ENCODE measurements at regions of chr1 and their contacts with region 1.

Region 1: DNA sequence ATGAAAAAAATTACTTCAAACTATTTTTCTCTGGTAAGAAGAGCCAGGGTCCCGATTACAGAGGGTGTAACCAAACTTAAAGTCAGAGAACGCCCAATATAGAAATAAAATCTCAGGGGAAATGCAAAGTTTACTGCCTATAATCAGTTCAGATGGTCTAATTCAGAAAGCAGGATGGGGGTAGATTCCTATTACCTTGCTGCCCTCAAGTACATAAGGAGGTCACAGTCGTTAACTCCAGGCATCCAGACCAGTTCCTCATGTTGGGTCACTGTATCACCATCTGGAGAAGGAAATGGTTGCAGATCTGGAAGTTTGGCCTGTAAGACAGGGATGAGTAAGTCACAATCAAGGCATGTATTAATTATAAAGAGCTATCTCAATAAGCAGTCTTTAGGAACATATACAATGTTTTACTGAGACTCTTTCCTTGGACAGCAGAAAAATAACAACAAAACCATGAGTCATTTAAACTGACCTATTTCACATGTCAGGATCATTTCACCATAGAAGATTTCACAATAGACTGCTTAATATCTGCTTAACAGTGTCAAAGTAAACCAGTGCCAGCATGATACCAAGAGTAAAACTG is 179.4 kb downstream of the SLC45A1 start:
- DNase-seq: no peak
- ATAC-seq: no peak
- H3K4me3 ChIP-seq: no peak overlapping the region
- H3K4me3 Mint-ChIP-seq: no peak overlapping the region
- H3K27ac ChIP-seq: peak overlapping the region; percentile 84
- H3K27ac Mint-ChIP-seq: peak overlapping the region; percentile 90 to 91
- H3K4me1 ChIP-seq: peaks cover 12% of the 10 kb centered on the region
- H3K4me1 Mint-ChIP-seq: peaks cover 20 to 22% of the 10 kb centered on the region in 2 donors
- H3K27me3 ChIP-seq: no peaks in the 10 kb centered on the region
- H3K27me3 Mint-ChIP-seq: no peaks in the 10 kb centered on the region
- CTCF ChIP-seq: no peak

Region 2: GRCh38 chr1:8396786-8397406 is 100.4 kb before region 1 on chr1:
- intact Hi-C with region 1: loop called (anchors 10 kb)
- DNase-seq: peak in 1 of 2 donors; percentile 49
- ATAC-seq: peak; percentile 82 to 88 (median 83)
- H3K4me3 ChIP-seq: no peak overlapping the region
- H3K4me3 Mint-ChIP-seq: peak overlapping the region; percentile 68
- H3K27ac ChIP-seq: no peak overlapping the region
- H3K27ac Mint-ChIP-seq: peak overlapping the region; percentile 22 to 67
- H3K4me1 ChIP-seq: peaks cover 28% of the 10 kb centered on the region
- H3K4me1 Mint-ChIP-seq: peaks cover 46 to 50% of the 10 kb centered on the region in 2 donors
- H3K27me3 ChIP-seq: no peaks in the 10 kb centered on the region
- H3K27me3 Mint-ChIP-seq: no peaks in the 10 kb centered on the region
- CTCF ChIP-seq: no peak

Region 3: DNA sequence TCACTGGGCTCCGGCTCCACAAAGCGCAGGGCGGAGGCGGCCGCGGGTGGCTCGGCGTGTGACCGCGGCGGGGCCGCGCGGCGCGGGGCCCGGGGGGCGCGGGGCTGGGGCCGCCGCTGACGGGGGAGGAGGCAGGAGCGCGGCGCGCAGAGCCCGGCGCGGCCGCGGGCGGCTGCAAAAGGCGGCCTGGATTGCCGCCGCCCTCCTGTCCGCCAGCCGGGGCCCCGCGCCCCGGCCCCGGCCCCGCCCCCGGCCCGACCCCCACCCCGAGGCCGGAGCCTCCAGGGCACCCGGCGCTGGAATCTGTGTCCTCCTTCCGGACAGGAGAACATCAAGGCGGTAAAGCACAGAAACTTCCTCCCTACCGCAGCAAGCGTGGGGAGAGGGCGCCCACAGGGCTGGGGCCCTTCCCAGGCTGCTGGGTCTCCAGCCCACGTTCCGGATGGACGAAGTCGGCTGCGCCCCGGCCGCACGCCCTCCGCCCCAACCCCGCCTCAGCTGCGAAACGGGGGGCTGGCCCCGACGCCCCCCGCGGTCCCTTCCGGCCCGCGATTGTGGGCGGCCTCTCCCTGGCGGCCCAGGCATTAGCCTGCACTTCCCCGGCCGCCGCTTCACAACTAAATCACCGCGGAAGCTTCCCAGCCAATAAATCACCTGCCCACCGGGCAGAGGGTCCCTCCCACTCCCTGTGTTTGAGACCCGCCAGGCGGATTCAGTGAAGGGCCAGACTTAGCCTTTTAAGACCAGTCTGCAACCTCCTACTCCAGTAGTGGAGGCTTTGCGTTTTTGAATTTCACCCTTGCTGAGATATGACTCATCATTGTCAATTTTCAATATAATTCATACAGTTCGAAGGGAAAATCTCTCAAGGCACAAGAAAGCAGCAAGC is 73.4 kb before region 1 on chr1:
- intact Hi-C with region 1: loop called (anchors 1 kb)
- DNase-seq: peak; percentile 47 to 67
- ATAC-seq: peak; percentile 48 to 60 (median 57)
- H3K4me3 ChIP-seq: peak overlapping the region; percentile 70
- H3K4me3 Mint-ChIP-seq: peak overlapping the region; percentile 96
- H3K27ac ChIP-seq: peak overlapping the region; percentile 65
- H3K27ac Mint-ChIP-seq: peak overlapping the region; percentile 80 to 91
- H3K4me1 ChIP-seq: peaks cover 49% of the 10 kb centered on the region
- H3K4me1 Mint-ChIP-seq: peaks cover 39 to 54% of the 10 kb centered on the region in 2 donors
- H3K27me3 ChIP-seq: no peaks in the 10 kb centered on the region
- H3K27me3 Mint-ChIP-seq: peaks cover 8 to 12% of the 10 kb centered on the region in 2 donors
- CTCF ChIP-seq: no peak

Region 4: GRCh38 chr1:8477166-8477982 is 19.9 kb before region 1 on chr1:
- intact Hi-C with region 1: loop called (anchors 1 kb)
- DNase-seq: no peak
- ATAC-seq: peak in 2 of 3 donors; percentile 18 to 40
- H3K4me3 ChIP-seq: no peak overlapping the region
- H3K4me3 Mint-ChIP-seq: no peak overlapping the region
- H3K27ac ChIP-seq: no peak overlapping the region
- H3K27ac Mint-ChIP-seq: no peak overlapping the region
- H3K4me1 ChIP-seq: peaks cover 4% of the 10 kb centered on the region
- H3K4me1 Mint-ChIP-seq: peaks cover 31 to 39% of the 10 kb centered on the region in 2 donors
- H3K27me3 ChIP-seq: no peaks in the 10 kb centered on the region
- H3K27me3 Mint-ChIP-seq: peaks cover 4 to 12% of the 10 kb centered on the region in 2 donors
- CTCF ChIP-seq: no peak

Region 5: GRCh38 chr1:8652467-8653046 is 155.3 kb after region 1 on chr1:
- intact Hi-C with region 1: loop called (anchors 2 kb)
- DNase-seq: peak; percentile 44 to 48
- ATAC-seq: peak in 2 of 3 donors; percentile 84 to 92
- H3K4me3 ChIP-seq: no peak overlapping the region
- H3K4me3 Mint-ChIP-seq: peak overlapping the region; percentile 80
- H3K27ac ChIP-seq: no peak overlapping the region
- H3K27ac Mint-ChIP-seq: peak overlapping the region; percentile 98 to 99
- H3K4me1 ChIP-seq: peaks cover 21% of the 10 kb centered on the region
- H3K4me1 Mint-ChIP-seq: peaks cover 29 to 31% of the 10 kb centered on the region in 2 donors
- H3K27me3 ChIP-seq: no peaks in the 10 kb centered on the region
- H3K27me3 Mint-ChIP-seq: no peaks in the 10 kb centered on the region
- CTCF ChIP-seq: no peak

Region 6: GRCh38 chr1:8702850-8703810 is 205.8 kb after region 1 on chr1:
- intact Hi-C with region 1: loop called (anchors 2 kb)
- DNase-seq: peak; percentile 68 to 75
- ATAC-seq: peak; percentile 70 to 86 (median 77)
- H3K4me3 ChIP-seq: peak overlapping the region; percentile 39
- H3K4me3 Mint-ChIP-seq: peak overlapping the region; percentile 93
- H3K27ac ChIP-seq: no peak overlapping the region
- H3K27ac Mint-ChIP-seq: peak overlapping the region; percentile 81 to 90
- H3K4me1 ChIP-seq: peaks cover 22% of the 10 kb centered on the region
- H3K4me1 Mint-ChIP-seq: peaks cover 34 to 38% of the 10 kb centered on the region in 2 donors
- H3K27me3 ChIP-seq: peaks cover 4% of the 10 kb centered on the region
- H3K27me3 Mint-ChIP-seq: no peaks in the 10 kb centered on the region
- CTCF ChIP-seq: no peak